Activated naive CD4-positive, alpha-beta T cell treated with anti-CD3 and anti-CD28 coated beads, Interleukin-2, amount 10 ng/mL, durations not matched to agents 7 days and 5 days (primary cell): ENCODE measurements at regions of chr11 and their contacts with region 1.

Region 1: GRCh38 chr11:64358907-64359711 is at the start of gene RPS6KA4:
- DNase-seq: peak; percentile 68
- H3K4me3 Mint-ChIP-seq: peak within 1 kb of the TSS; percentile 89
- H3K27ac Mint-ChIP-seq: peak within 1 kb of the TSS; percentile 85
- H3K4me1 Mint-ChIP-seq: peaks cover 39% of the 10 kb centered on the region
- H3K27me3 Mint-ChIP-seq: no peaks in the 10 kb centered on the region

Region 2: DNA sequence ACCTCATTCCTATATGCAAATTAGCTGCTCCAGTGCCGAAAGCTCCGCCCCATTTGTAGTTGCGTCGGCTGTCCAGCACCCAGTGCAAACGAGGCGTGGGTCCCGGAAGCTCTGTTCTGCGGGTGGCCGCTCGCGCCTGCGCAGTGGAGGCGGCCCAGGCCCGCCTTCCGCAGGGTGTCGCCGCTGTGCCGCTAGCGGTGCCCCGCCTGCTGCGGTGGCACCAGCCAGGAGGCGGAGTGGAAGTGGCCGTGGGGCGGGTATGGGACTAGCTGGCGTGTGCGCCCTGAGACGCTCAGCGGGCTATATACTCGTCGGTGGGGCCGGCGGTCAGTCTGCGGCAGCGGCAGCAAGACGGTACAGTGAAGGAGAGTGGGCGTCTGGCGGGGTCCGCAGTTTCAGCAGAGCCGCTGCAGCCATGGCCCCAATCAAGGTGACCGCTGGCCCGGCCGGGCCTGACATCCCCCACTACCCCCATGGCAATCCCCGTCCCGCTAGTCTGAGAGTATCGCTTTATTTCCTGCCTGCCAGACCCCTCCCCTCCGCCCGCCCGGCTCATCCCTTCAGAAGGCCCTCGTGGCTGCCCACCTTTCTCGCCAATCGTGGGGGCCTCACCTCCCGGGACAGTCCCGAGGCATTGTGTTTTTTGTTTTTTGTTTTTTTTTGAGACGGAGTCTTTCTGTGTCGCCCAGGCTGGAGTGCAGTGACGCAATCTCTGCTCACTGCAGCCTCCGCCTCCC is 41.0 kb before region 1 on chr11 and contains the start of gene PRDX5:
- CTCF ChIA-PET with region 1: interaction called, 24 read pairs
- DNase-seq: peak; percentile 97
- H3K4me3 Mint-ChIP-seq: peak within 1 kb of the TSS; percentile 97
- H3K27ac Mint-ChIP-seq: peak within 1 kb of the TSS; percentile 100
- H3K4me1 Mint-ChIP-seq: peaks cover 55% of the 10 kb centered on the region
- H3K27me3 Mint-ChIP-seq: no peaks in the 10 kb centered on the region

Region 3: DNA sequence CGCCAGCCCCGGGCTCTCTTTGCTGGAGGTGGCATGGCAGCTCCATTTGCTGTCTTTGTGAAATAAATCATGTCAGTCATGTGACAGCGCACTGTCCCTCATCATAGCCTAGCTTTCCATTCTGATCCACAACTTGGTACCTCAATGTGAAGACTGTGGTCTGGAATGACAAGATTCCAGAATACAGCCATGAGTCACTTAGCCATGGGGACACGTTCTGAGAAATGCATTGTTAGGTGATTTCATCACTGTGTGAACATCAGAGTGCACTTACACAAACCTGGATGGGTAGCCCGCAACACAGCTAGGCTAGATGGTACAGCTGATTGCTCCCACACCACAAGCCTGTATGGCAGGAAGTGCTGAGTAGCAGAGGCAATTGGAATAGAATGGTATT is 27.2 kb after region 1 on chr11:
- CTCF ChIA-PET with region 1: no interaction called
- DNase-seq: no peak
- H3K4me3 Mint-ChIP-seq: no peak overlapping the region
- H3K27ac Mint-ChIP-seq: no peak overlapping the region
- H3K4me1 Mint-ChIP-seq: peaks cover 10% of the 10 kb centered on the region
- H3K27me3 Mint-ChIP-seq: peaks cover 38% of the 10 kb centered on the region

Region 4: DNA sequence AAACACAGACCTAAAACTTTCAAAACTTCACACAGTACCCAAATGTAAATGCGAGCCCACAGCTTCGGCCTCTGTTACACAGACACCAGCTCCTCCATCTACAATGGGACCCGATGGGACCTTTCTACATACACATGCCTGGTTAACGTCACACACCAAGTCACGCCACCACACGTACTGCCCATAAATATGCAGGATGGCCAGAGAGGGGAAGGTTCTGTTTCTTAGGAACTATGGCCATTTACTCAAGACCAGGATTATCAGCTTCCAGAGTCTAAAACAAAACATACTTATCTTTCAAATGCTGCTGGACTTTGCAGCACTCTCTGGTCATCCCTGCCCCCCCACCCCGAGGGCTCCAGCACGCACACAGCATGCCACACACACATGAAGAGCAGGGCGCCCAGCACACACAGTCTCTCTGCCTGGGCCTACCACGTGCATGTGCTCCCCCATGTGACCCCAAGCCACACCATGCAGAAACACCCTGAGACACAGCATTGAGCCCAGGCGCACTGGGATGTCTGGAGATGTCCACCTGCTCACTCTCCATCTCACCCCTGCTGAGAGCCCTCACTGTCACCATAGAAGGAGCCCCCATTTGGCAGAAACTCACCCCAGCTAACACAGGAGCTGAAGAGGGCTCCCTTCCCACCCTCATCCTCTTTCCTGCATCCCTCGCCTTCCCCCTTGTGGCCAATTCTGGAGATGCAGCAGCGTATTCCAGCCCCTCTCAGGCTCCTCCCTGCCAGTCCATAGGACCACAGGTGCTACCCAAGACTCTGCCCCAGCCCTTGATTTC is 293.7 kb after region 1 on chr11:
- CTCF ChIA-PET with region 1: interaction called, 22 read pairs
- DNase-seq: peak; percentile 84
- H3K4me3 Mint-ChIP-seq: no peak overlapping the region
- H3K27ac Mint-ChIP-seq: no peak overlapping the region
- H3K4me1 Mint-ChIP-seq: peaks cover 4% of the 10 kb centered on the region
- H3K27me3 Mint-ChIP-seq: peaks cover 25% of the 10 kb centered on the region